ENCODE measurements at regions of chr19 and their contacts with region 1.

Region 1: GRCh38 chr19:17873786-17874757 is 2.3 kb downstream of the SLC5A5 start:
- DNase-seq: peak; percentile 60 to 63
- H3K4me3 ChIP-seq: peak overlapping the region; percentile 24 to 47 (median 31)
- H3K27ac ChIP-seq: peak overlapping the region in 1 of 5 donors; percentile 11
- H3K4me1 ChIP-seq: peaks cover 18 to 32% (median 27%) of the 10 kb centered on the region in 4 donors
- H3K27me3 ChIP-seq: peaks cover 18 to 88% (median 55%) of the 10 kb centered on the region in 3 donors
- CTCF ChIP-seq: no peak
- EP300 ChIP-seq: no peak
- POLR2A ChIP-seq: no peak

Region 2: DNA sequence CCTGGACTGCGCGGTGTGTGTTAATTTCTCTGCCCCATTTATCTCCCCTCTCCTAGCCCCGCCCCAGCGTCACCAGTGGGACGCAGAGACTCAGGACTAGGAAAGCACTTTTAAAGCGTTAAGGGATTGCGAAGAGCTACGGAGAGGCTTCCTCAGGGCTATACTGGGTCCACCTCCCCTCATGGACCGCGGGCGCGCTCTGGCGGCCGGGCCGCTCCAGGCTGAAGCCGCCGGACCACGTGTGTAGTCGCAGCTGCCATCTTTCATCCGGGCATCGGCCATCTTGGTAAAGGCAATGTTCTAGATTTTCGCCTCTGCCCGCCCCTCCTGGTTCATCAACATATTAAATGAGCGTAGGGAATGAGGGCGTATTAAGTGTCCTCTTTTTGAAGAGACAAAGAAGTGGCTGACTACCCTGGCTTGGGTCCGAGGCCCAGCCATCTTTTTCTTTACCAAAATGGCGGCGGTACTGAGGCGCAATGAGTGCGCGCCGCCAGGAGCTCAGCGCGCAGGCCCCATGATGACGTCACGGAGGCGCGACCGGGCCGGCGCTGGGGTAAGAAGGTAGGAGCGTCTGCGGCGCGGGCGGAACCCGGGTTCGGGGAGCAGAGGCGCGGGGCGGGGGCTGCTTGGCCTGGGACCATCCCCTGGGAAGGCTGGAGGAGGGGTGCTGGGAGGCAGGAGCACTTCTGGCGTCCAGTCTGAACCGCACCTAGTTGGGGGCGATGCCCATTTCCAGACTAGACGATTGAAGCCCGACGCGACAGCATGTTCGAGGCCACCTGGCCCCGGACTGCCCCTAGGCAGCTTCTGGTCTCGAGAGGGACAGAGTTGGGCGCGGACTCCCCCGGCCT is 58.6 kb after region 1 on chr19 and contains the start of gene CCDC124:
- intact Hi-C with region 1: loop called (anchors 5 kb)
- DNase-seq: peak; percentile 94 to 97
- H3K4me3 ChIP-seq: peak within 1 kb of the TSS; percentile 70 to 87 (median 78)
- H3K27ac ChIP-seq: peak within 1 kb of the TSS; percentile 76 to 91 (median 86)
- H3K4me1 ChIP-seq: peaks cover 21 to 29% (median 25%) of the 10 kb centered on the region in 4 donors
- H3K27me3 ChIP-seq: no peaks in the 10 kb centered on the region
- CTCF ChIP-seq: peak in 5 of 7 experiments; percentile 68 to 98 (median 91)
- EP300 ChIP-seq: no peak
- POLR2A ChIP-seq: peak in 2 of 4 donors; percentile 79 to 83
- total RNA-seq, gene CCDC124: 15.8 to 98.7 (median 68.7) TPM